Naive thymus-derived CD4-positive, alpha-beta T cell (primary cell): ENCODE measurements at regions of chr6 and their contacts with region 1.

Region 1: DNA sequence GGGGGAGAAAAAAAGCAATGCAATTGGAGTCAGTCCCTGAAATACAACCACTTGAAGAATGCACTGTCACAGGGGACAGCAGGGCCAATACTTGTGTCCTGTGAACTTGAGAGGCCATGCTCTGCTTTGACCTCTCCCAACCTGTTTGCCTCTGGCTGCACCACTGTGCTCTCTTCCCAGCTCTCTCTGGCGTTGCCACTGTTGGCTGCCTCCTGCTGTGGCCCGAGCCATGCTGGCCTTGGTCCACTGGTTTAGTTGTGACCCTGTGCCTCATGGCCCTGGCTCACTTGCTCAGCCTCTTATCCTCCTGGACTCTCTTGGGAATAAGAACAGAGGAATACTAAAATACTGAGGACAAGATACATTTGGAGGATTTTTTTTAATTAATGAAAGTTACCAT is 14.5 kb upstream of the FBXO30 start:
- DNase-seq: no peak
- ATAC-seq: no peak
- H3K4me3 ChIP-seq: no peak overlapping the region
- H3K4me3 Mint-ChIP-seq: no peak overlapping the region
- H3K27ac ChIP-seq: no peak overlapping the region
- H3K27ac Mint-ChIP-seq: no peak overlapping the region
- H3K4me1 ChIP-seq: no peaks in the 10 kb centered on the region
- H3K4me1 Mint-ChIP-seq: no peaks in the 10 kb centered on the region
- H3K27me3 ChIP-seq: no peaks in the 10 kb centered on the region
- H3K27me3 Mint-ChIP-seq: peaks cover 0 to 2% (median 0%) of the 10 kb centered on the region in 5 donors

Region 2: GRCh38 chr6:145199961-145200360 is 629.1 kb before region 1 on chr6:
- CTCF ChIA-PET with region 1: no interaction called
- POLR2A ChIA-PET with region 1: no interaction called
- intact Hi-C with region 1: loop called in 1 of 2 experiments (anchors 5 kb)
- DNase-seq: no peak
- ATAC-seq: no peak
- H3K4me3 ChIP-seq: no peak overlapping the region
- H3K4me3 Mint-ChIP-seq: no peak overlapping the region
- H3K27ac ChIP-seq: no peak overlapping the region
- H3K27ac Mint-ChIP-seq: no peak overlapping the region
- H3K4me1 ChIP-seq: no peaks in the 10 kb centered on the region
- H3K4me1 Mint-ChIP-seq: no peaks in the 10 kb centered on the region
- H3K27me3 ChIP-seq: no peaks in the 10 kb centered on the region
- H3K27me3 Mint-ChIP-seq: peaks cover 9 to 26% (median 14%) of the 10 kb centered on the region in 5 donors

Region 3: DNA sequence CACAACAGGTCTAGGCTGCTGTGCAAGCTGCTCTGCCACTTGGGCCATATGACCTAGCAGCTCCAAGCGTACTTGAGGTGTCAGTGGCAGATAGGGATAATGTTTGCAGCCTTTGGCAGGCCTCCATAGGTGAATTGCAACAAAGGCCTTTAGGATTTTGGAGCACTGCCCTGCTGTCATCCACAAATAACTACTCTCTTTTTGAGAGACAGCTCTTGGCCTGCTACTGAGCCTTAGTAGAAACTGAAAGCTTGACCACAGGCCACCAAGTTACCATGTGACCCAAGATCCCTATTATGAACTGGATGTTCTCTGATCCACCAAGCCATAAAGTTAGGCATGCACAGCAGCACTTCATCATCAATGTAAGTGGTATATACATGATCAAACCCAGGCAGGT is 44.4 kb before region 1 on chr6:
- CTCF ChIA-PET with region 1: no interaction called
- POLR2A ChIA-PET with region 1: no interaction called
- intact Hi-C with region 1: no loop called
- DNase-seq: no peak
- ATAC-seq: no peak
- H3K4me3 ChIP-seq: no peak overlapping the region
- H3K4me3 Mint-ChIP-seq: no peak overlapping the region
- H3K27ac ChIP-seq: no peak overlapping the region
- H3K27ac Mint-ChIP-seq: no peak overlapping the region
- H3K4me1 ChIP-seq: no peaks in the 10 kb centered on the region
- H3K4me1 Mint-ChIP-seq: peaks cover 0 to 3% (median 0%) of the 10 kb centered on the region in 7 donors
- H3K27me3 ChIP-seq: no peaks in the 10 kb centered on the region
- H3K27me3 Mint-ChIP-seq: no peaks in the 10 kb centered on the region

Region 4: GRCh38 chr6:145866456-145867396 is 37.6 kb after region 1 on chr6:
- CTCF ChIA-PET with region 1: no interaction called
- POLR2A ChIA-PET with region 1: no interaction called
- intact Hi-C with region 1: no loop called
- DNase-seq: peak in 3 of 9 donors; percentile 3 to 9 (median 9)
- ATAC-seq: peak; percentile 50
- H3K4me3 ChIP-seq: no peak overlapping the region
- H3K4me3 Mint-ChIP-seq: peak overlapping the region in 9 of 10 donors; percentile 20 to 73 (median 57)
- H3K27ac ChIP-seq: peak overlapping the region; percentile 39
- H3K27ac Mint-ChIP-seq: peak overlapping the region; percentile 48 to 89 (median 71)
- H3K4me1 ChIP-seq: peaks cover 17 to 29% of the 10 kb centered on the region in 2 donors
- H3K4me1 Mint-ChIP-seq: peaks cover 19 to 37% (median 31%) of the 10 kb centered on the region in 7 donors
- H3K27me3 ChIP-seq: no peaks in the 10 kb centered on the region
- H3K27me3 Mint-ChIP-seq: no peaks in the 10 kb centered on the region

Region 5: DNA sequence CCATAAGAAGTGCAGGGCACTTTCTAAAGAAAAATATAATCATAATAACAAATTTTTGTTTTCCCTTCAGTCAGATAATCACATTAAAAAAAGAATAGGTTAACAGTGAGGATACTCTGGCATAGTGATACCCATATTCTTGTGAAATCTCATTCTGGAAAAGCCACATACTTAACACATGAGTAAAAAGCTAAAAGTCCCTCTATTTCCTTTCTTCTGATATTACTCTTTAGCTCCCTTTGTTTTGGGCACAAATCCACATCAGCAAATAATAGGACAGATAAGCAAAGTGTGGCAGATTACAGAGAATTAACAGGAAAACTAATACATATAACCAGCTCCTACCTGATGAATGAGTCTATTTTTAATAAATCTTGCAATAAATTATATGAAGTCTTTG is 119.2 kb after region 1 on chr6:
- CTCF ChIA-PET with region 1: no interaction called
- POLR2A ChIA-PET with region 1: no interaction called
- intact Hi-C with region 1: no loop called
- DNase-seq: no peak
- ATAC-seq: no peak
- H3K4me3 ChIP-seq: no peak overlapping the region
- H3K4me3 Mint-ChIP-seq: no peak overlapping the region
- H3K27ac ChIP-seq: no peak overlapping the region
- H3K27ac Mint-ChIP-seq: no peak overlapping the region
- H3K4me1 ChIP-seq: no peaks in the 10 kb centered on the region
- H3K4me1 Mint-ChIP-seq: peaks cover 0 to 4% (median 0%) of the 10 kb centered on the region in 7 donors
- H3K27me3 ChIP-seq: no peaks in the 10 kb centered on the region
- H3K27me3 Mint-ChIP-seq: no peaks in the 10 kb centered on the region